PC-3 (cell line): ENCODE measurements at regions of chr15 and their contacts with region 1.

Region 1: GRCh38 chr15:64067564-64068030 is 21.3 kb upstream of the DAPK2 start:
- DNase-seq: peak; percentile 73
- ATAC-seq: peak; percentile 58
- H3K4me3 ChIP-seq: no peak overlapping the region
- H3K27ac ChIP-seq: no peak overlapping the region
- H3K4me1 ChIP-seq: peaks cover 25% of the 10 kb centered on the region
- H3K27me3 ChIP-seq: no peaks in the 10 kb centered on the region
- CTCF ChIP-seq: peak; percentile 74

Region 2: GRCh38 chr15:63610200-63610841 is 457.3 kb before region 1 on chr15:
- CTCF ChIA-PET with region 1: interaction called, 4 read pairs
- POLR2A ChIA-PET with region 1: no interaction called
- intact Hi-C with region 1: loop called (anchors 2 kb)
- DNase-seq: peak; percentile 85
- ATAC-seq: peak; percentile 86
- H3K4me3 ChIP-seq: no peak overlapping the region
- H3K27ac ChIP-seq: peak overlapping the region; percentile 49
- H3K4me1 ChIP-seq: peaks cover 19% of the 10 kb centered on the region
- H3K27me3 ChIP-seq: no peaks in the 10 kb centered on the region
- CTCF ChIP-seq: peak; percentile 83

Region 3: GRCh38 chr15:63752075-63752684 is 315.4 kb before region 1 on chr15:
- CTCF ChIA-PET with region 1: interaction called, 12 read pairs
- POLR2A ChIA-PET with region 1: no interaction called
- intact Hi-C with region 1: loop called (anchors 5 kb)
- DNase-seq: peak; percentile 68
- ATAC-seq: peak; percentile 89
- H3K4me3 ChIP-seq: no peak overlapping the region
- H3K27ac ChIP-seq: no peak overlapping the region
- H3K4me1 ChIP-seq: 0 out of 2 replicates have a peak, but pooled peaks cover 3% of the 10 kb centered on the region
- H3K27me3 ChIP-seq: no peaks in the 10 kb centered on the region
- CTCF ChIP-seq: peak; percentile 79

Region 4: DNA sequence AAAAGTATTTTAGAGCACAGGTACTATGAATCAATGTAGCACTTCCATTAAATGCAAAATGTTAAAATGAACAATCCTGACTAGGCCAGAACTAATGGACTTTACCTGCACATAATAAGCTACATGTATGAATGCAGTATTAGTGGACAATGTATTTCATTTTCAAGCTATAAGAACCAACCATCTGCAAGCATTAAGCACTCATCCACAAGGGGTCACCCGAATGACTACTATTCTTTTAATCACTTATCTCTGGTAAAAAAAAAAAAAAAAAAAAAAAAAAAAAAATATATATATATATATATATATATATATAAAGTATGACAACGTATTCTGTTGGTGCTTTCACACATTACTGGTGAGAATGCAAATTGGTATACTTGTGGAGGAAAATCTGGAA is 241.1 kb before region 1 on chr15:
- CTCF ChIA-PET with region 1: no interaction called
- POLR2A ChIA-PET with region 1: interaction called, 4 read pairs
- intact Hi-C with region 1: loop called (anchors 1 kb)
- DNase-seq: peak; percentile 30
- ATAC-seq: no peak
- H3K4me3 ChIP-seq: no peak overlapping the region
- H3K27ac ChIP-seq: no peak overlapping the region
- H3K4me1 ChIP-seq: no peaks in the 10 kb centered on the region
- H3K27me3 ChIP-seq: no peaks in the 10 kb centered on the region
- CTCF ChIP-seq: peak; percentile 24; the same call in 1 of the 2 replicates

Region 5: GRCh38 chr15:63891079-63891767 is 176.4 kb before region 1 on chr15:
- CTCF ChIA-PET with region 1: no interaction called
- POLR2A ChIA-PET with region 1: no interaction called
- intact Hi-C with region 1: loop called (anchors 1 kb)
- DNase-seq: peak; percentile 81
- ATAC-seq: peak; percentile 93
- H3K4me3 ChIP-seq: no peak overlapping the region
- H3K27ac ChIP-seq: no peak overlapping the region
- H3K4me1 ChIP-seq: 0 out of 2 replicates have a peak, but pooled peaks cover under 1% of the 10 kb centered on the region
- H3K27me3 ChIP-seq: no peaks in the 10 kb centered on the region
- CTCF ChIP-seq: peak; percentile 86

Region 6: GRCh38 chr15:64024172-64025050 is 43.2 kb before region 1 on chr15:
- CTCF ChIA-PET with region 1: no interaction called
- POLR2A ChIA-PET with region 1: no interaction called
- intact Hi-C with region 1: no loop called
- DNase-seq: no peak
- ATAC-seq: no peak
- H3K4me3 ChIP-seq: no peak overlapping the region
- H3K27ac ChIP-seq: no peak overlapping the region
- H3K4me1 ChIP-seq: peaks cover 18% of the 10 kb centered on the region
- H3K27me3 ChIP-seq: no peaks in the 10 kb centered on the region
- CTCF ChIP-seq: no peak

Region 7: DNA sequence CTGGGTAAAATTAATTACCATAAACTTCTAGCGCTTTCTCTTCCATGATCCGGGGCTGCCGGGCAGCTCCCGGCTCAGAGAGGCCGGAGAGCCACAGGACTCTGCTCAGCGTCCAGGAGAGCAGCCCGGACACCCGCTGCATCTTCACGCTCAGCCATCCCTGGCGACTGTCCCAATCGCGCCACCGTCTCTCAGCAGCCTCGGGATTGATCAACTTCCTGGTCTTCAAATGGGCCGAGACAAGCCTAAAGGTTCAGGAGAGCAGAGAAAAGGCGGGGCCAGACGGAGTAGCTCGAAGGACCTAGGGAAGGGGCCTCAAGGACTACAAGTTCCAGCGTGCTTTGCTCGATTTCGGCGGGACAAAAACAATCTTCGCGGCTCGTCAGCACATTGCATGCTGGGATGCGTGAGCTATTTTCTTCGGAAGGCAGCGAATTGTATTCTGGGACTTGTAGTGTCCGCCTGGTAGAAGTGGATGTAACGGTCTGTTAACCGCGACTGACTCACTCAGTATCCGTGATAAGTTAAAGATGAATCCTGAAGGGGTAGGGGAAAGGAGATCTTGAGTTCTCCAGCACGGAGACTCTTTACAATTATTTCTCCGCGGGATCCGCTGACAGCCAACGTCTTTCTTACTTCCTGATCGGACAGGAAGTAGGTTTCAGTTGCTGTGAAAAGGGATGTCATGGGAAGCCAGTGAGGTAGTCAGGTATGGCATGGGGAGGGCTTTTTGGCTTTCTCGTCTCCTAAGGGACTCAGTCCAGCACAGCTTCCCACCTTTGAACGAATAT is 26.2 kb after region 1 on chr15 and contains the start of gene CIAO2A:
- CTCF ChIA-PET with region 1: no interaction called
- POLR2A ChIA-PET with region 1: interaction called, 3 read pairs
- intact Hi-C with region 1: loop called (anchors 2 kb)
- DNase-seq: peak; percentile 97
- ATAC-seq: peak; percentile 82
- H3K4me3 ChIP-seq: peak within 1 kb of the TSS; percentile 90
- H3K27ac ChIP-seq: peak within 1 kb of the TSS; percentile 49
- H3K4me1 ChIP-seq: peaks cover 28% of the 10 kb centered on the region
- H3K27me3 ChIP-seq: no peaks in the 10 kb centered on the region
- CTCF ChIP-seq: no peak
- total RNA-seq, gene CIAO2A: 83.7 and 92.4 TPM in 2 replicates

Region 8: DNA sequence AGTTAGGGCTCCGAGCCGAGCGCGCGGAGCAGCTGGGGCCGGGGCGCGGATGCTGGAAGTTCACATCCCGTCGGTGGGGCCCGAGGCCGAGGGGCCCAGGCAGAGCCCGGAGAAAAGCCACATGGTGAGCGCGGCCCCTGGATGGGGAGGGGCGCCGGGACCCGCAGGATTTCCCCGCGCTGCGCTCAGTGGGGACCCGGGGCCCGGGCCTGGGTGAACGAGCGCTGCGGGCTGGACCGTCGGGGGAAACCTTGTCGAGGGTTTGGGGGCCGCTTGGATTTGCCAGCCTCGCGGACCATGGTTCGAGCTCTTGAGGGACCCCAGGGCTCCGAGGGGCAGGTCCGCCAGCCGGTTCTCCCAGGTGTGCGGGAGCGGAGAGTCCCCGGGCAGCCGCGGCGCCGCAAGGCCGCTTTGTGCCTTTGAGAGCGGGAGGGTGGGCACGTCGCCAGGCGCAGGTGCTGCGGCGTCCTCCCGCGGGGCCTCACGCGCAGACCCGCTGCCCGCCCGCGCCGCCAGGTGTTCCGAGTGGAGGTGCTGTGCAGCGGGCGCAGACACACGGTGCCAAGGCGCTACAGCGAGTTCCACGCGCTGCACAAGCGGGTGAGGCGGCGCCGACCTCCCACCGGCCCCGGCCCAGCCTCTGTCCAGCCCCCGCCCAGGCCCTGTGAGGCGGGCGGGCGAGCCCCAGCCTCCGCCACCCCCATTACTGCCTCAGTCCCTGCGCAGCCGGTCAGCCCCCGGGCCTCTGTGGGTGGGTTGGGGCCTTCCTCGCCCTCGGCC is 84.3 kb after region 1 on chr15 and contains the start of gene SNX22:
- CTCF ChIA-PET with region 1: no interaction called
- POLR2A ChIA-PET with region 1: no interaction called
- intact Hi-C with region 1: no loop called
- DNase-seq: no peak
- ATAC-seq: 0 out of 2 replicates have a peak, but pooled peaks have one; percentile 1
- H3K4me3 ChIP-seq: peak within 1 kb of the TSS; percentile 62
- H3K27ac ChIP-seq: no peak within 1 kb of the TSS
- H3K4me1 ChIP-seq: no peaks in the 10 kb centered on the region; the same call in 1 of the 2 replicates
- H3K27me3 ChIP-seq: peaks cover 10% of the 10 kb centered on the region
- CTCF ChIP-seq: no peak
- total RNA-seq, gene SNX22: 0.77 TPM in 1 of 2 replicates, not detected in the other

Region 9: GRCh38 chr15:64197425-64197824 is 129.8 kb after region 1 on chr15:
- CTCF ChIA-PET with region 1: no interaction called
- POLR2A ChIA-PET with region 1: no interaction called
- intact Hi-C with region 1: no loop called
- DNase-seq: no peak
- ATAC-seq: no peak
- H3K4me3 ChIP-seq: no peak overlapping the region
- H3K27ac ChIP-seq: no peak overlapping the region
- H3K4me1 ChIP-seq: no peaks in the 10 kb centered on the region
- H3K27me3 ChIP-seq: no peaks in the 10 kb centered on the region
- CTCF ChIP-seq: no peak